Aorta (tissue), 5 donors: ENCODE measurements at regions of chr15 and their contacts with region 1.

Region 1: GRCh38 chr15:81256916-81257315 is 60.2 kb downstream of the IL16 start:
- DNase-seq: no peak
- ATAC-seq: no peak
- H3K4me3 ChIP-seq: no peak overlapping the region
- H3K27ac ChIP-seq: no peak overlapping the region
- H3K4me1 ChIP-seq: no peaks in the 10 kb centered on the region
- H3K27me3 ChIP-seq: no peaks in the 10 kb centered on the region

Region 2: DNA sequence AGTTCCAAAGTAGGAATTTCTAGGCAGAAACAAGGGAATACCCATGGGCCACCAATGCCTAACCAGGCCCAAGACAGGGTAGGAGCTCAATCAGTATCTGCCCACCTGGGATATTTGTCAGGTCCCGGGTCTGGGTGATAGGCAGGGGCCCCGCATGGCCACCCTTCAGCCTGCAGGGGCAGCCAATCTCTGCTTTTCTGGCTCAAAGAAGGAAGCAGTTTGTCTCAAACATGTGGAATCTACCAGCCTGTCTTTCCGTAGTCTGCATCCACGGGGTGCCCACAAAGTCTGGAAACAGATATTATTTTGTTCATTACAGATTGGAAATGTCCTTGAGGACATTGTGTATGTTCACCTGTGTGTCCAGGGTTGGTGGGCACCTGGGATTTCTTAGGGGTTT is 421.6 kb before region 1 on chr15:
- intact Hi-C with region 1: no loop called
- DNase-seq: no peak
- ATAC-seq: no peak
- H3K4me3 ChIP-seq: no peak overlapping the region
- H3K27ac ChIP-seq: peak overlapping the region in 1 of 2 donors; percentile 65
- H3K4me1 ChIP-seq: peaks cover 0 to 2% of the 10 kb centered on the region in 2 donors
- H3K27me3 ChIP-seq: no peaks in the 10 kb centered on the region

Region 3: DNA sequence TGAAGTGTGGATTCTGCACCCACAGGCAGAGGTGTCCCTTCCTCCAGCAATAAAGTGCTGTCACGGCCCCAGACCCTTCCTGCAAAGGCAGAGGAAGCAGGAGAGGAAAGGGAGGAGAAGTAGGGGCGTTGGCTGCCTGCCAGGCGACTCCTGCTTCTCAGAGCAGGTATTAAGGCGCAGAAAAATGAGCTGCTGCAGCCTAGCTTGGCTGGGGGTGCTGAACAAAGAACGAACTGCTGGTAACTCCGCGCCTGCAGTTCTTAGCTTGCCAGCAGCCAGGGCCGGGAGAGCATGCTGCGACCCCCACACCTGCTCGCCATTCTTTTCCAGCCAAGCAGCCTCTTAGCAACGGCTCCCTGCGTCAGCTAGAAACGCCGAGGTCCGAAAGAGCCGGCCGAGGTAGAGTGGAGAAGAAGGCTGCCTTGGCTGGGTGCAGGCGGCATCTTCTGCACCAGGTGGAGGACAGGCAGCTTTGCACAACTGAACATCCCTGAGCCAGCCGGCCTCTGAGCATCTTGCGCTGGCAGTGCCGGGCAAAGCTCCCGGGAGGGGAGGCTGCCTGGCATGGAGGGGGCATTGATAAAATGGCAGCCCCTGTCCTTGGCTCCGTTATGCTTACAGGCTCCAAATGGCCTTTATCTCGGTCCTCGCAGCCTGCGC is 492.9 kb after region 1 on chr15:
- intact Hi-C with region 1: loop called in 1 of 2 experiments (anchors 10 kb)
- DNase-seq: no peak
- ATAC-seq: no peak
- H3K4me3 ChIP-seq: no peak overlapping the region
- H3K27ac ChIP-seq: no peak overlapping the region
- H3K4me1 ChIP-seq: no peaks in the 10 kb centered on the region
- H3K27me3 ChIP-seq: no peaks in the 10 kb centered on the region